Pancreas (tissue), 10 donors: ENCODE measurements at regions of chr7 and their contacts with region 1.

Region 1: DNA sequence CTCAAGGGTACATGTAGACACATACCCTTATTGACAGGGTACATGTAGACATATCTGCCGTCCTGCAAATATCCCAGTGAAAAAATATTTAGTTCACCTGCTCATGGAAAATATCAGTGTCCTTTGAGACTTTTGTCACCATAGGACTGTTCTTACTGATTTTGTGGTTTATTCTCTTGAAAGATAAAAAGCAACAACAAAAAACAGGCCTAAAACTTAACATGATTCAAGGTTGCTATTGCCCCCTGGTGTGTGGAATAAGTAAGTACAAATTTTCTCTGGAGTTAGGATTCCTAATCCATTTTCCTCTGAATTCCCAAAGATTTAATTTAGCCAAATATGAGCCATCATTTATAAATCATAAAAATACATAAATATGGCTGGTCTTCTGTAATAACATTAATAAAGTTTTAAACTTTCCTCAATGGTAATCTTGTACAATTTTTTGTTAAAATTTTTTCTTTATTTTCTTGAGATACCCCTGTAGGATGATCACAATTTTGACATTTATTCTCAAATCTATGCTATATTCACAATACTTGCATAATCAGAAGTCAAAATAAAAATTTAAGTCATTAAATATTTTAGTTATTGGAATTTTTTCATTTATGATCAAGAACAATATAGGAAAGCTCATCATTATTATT is 741.4 kb upstream of the POT1 start:
- DNase-seq: no peak
- ATAC-seq: peak in 3 of 4 donors; percentile 37 to 52 (median 46)
- H3K4me3 ChIP-seq: no peak overlapping the region
- H3K27ac ChIP-seq: no peak overlapping the region
- H3K4me1 ChIP-seq: no peaks in the 10 kb centered on the region
- H3K27me3 ChIP-seq: no peaks in the 10 kb centered on the region
- CTCF ChIP-seq: peak; percentile 7 to 48 (median 34)

Region 2: GRCh38 chr7:125059861-125060456 is 611.1 kb before region 1 on chr7:
- intact Hi-C with region 1: loop called in 1 of 3 experiments (anchors 5 kb)
- DNase-seq: no peak
- ATAC-seq: peak in 1 of 4 donors; percentile 41
- H3K4me3 ChIP-seq: no peak overlapping the region
- H3K27ac ChIP-seq: no peak overlapping the region
- H3K4me1 ChIP-seq: peaks cover 0 to 5% (median 0%) of the 10 kb centered on the region in 3 donors
- H3K27me3 ChIP-seq: peaks cover 0 to 5% (median 0%) of the 10 kb centered on the region in 4 donors
- CTCF ChIP-seq: peak; percentile 7 to 27 (median 18)

Region 3: GRCh38 chr7:125644109-125644508 is 26.9 kb before region 1 on chr7:
- intact Hi-C with region 1: no loop called
- DNase-seq: no peak
- ATAC-seq: no peak
- H3K4me3 ChIP-seq: no peak overlapping the region
- H3K27ac ChIP-seq: no peak overlapping the region
- H3K4me1 ChIP-seq: peaks cover 0 to 10% (median 10%) of the 10 kb centered on the region in 3 donors
- H3K27me3 ChIP-seq: no peaks in the 10 kb centered on the region
- CTCF ChIP-seq: no peak